ENCODE measurements at regions of chr6 and their contacts with region 1.

Region 1: GRCh38 chr6:36615018-36615761 is 21.0 kb downstream of the SRSF3 start:
- DNase-seq: peak in 4 of 10 donors; percentile 12 to 40 (median 22)
- H3K4me3 ChIP-seq: no peak overlapping the region
- H3K27ac ChIP-seq: peak overlapping the region in 8 of 59 donors; percentile 1 to 40 (median 16)
- H3K27me3 ChIP-seq: no peaks in the 10 kb centered on the region
- CTCF ChIP-seq: peak; percentile 48 to 83 (median 71)

Region 2: DNA sequence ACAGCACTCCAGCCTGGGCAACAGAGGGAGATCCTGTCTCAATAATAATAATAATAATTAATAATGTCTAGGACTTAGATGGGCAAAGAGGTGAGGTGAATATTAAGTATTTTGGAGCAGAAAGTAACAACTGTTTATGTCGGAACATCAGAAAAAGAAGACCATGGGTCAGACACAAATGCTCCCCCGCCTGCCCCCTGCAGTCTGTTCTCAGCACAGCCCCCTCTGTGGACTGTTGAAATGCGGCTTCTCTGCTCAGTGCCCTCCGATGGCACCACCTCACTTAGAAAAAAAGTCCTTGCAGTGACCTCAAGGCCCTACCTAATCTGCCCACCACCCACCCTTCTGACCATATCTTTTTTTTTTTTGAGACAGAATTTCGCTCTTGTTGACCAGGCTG is 222.6 kb before region 1 on chr6:
- intact Hi-C with region 1: no loop called
- DNase-seq: no peak
- H3K4me3 ChIP-seq: no peak overlapping the region
- H3K27ac ChIP-seq: no peak overlapping the region
- H3K27me3 ChIP-seq: no peaks in the 10 kb centered on the region
- CTCF ChIP-seq: no peak

Region 3: DNA sequence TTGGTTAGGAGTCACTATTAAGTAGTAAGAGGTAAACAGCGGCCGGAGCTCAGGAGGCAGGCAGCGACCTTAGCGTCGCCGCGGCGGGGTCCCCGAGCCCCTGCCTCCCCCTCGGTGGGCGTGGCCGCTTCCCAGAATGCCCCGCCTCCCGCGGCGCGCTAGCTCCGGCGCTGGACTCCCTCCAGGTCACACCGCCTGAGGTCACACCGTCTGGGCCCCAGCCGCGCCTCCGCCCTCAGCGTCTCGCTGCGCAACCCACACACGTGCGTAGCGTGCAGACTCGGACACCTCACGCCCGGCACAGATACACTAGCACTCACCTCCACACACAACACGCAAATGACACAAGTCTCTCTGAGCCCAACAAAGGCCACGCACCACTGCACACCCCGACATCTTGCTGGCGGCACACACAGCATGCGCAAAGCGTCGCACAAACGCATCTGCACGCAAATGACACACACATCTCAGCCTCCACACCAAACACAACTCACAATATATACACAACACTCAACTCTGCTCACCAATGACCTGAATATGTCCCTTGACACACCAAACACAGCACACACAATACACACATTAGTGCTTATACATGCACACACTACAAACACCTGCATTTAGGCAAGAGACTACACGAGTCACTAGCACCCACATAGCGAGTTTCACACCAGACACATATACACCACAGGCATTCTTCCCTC is 45.7 kb after region 1 on chr6:
- intact Hi-C with region 1: no loop called
- DNase-seq: peak in 2 of 10 donors; percentile 47 to 52
- H3K4me3 ChIP-seq: peak overlapping the region in 50 of 59 donors; percentile 4 to 55 (median 37)
- H3K27ac ChIP-seq: no peak overlapping the region
- H3K27me3 ChIP-seq: peaks cover 0 to 11% (median 0%) of the 10 kb centered on the region in 45 donors
- CTCF ChIP-seq: no peak

Region 4: GRCh38 chr6:36851149-36851614 is 236.0 kb after region 1 on chr6:
- intact Hi-C with region 1: loop called in 1 of 2 experiments (anchors 5 kb)
- DNase-seq: peak in 3 of 10 donors; percentile 50 to 70 (median 69)
- H3K4me3 ChIP-seq: no peak overlapping the region
- H3K27ac ChIP-seq: peak overlapping the region in 29 of 59 donors; percentile 1 to 75 (median 36)
- H3K27me3 ChIP-seq: no peaks in the 10 kb centered on the region
- CTCF ChIP-seq: peak; percentile 63 to 87 (median 79)